Endothelial cell of umbilical vein (primary cell): ENCODE measurements at regions of chr14 and their contacts with region 1.

Region 1: DNA sequence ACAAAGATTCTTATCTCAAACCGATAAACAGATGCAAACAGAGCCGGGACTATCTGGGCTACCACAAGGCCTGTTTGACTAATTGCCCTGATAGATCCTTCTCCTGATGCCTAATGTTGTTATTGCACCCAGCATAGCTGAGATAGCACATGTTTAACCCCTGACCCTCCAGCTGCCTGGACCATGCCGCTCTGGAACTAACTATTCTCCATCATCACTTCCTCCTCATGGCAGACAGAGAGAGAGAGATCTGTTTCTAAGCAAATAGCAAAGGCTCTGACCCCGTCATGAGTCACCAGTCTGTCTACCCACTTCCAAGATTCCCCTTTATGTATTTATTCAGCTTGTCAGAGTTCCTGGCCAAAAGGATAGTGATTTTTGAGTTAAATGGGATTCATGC is 58.2 kb upstream of the FLRT2 start:
- DNase-seq: peak; percentile 100
- H3K4me3 ChIP-seq: no peak overlapping the region
- H3K27ac ChIP-seq: peak overlapping the region; percentile 97
- H3K4me1 ChIP-seq: peaks cover 54% of the 10 kb centered on the region
- H3K27me3 ChIP-seq: no peaks in the 10 kb centered on the region
- CTCF ChIP-seq: no peak
- POLR2A ChIP-seq: peak; percentile 86

Region 2: DNA sequence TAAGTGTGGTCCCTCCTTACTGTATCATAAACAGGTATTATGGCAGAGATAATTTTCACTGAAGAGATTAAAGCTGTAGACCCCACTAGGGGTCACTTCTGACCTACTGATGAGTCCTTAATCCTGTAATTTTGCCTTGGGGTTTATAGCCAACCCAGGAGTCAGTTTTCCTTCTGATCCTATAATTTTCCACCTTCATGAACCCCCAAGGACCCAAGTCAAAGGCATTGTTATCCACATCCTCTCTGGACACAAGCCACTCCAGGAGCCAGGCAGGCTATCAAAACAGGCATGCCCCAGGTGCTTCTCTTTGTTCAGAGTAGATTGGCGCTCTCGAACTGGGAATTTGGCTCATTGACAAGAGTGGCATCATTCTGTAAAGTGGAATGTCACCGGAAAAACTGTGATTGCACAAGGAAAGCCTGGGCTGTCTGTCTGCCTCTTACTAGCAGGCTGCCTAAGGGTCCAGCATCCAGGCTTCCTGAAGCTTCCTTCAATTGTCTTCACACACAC is 1465.0 kb before region 1 on chr14:
- CTCF ChIA-PET with region 1: no interaction called
- POLR2A ChIA-PET with region 1: no interaction called
- dilution Hi-C with region 1: no loop called
- intact Hi-C with region 1: loop called (anchors 1 kb)
- DNase-seq: peak; percentile 96
- H3K4me3 ChIP-seq: no peak overlapping the region
- H3K27ac ChIP-seq: peak overlapping the region; percentile 61
- H3K4me1 ChIP-seq: peaks cover 10% of the 10 kb centered on the region
- H3K27me3 ChIP-seq: no peaks in the 10 kb centered on the region
- CTCF ChIP-seq: peak; percentile 10 to 11
- POLR2A ChIP-seq: no peak

Region 3: DNA sequence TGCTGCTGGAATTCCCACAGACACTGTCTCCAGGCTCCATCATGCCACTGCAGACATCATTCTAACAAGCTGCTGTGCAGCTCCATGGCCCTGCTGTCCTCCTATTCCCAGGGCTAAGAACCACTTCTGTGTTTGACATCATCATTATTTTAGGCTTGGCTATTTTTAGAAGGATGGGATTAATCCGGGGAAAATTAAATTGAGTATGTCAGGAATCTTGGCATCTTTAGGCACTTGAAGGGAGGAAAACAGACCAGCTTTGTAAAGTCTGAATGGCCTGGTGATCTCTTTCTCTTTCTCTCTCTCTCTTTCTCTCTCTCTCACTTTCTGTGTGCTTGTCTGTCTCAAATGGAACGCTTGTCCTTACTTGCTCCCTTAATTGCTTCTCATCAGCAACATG is 510.1 kb before region 1 on chr14:
- CTCF ChIA-PET with region 1: no interaction called
- POLR2A ChIA-PET with region 1: no interaction called
- dilution Hi-C with region 1: no loop called
- intact Hi-C with region 1: loop called (anchors 1 kb)
- DNase-seq: no peak
- H3K4me3 ChIP-seq: no peak overlapping the region
- H3K27ac ChIP-seq: no peak overlapping the region
- H3K4me1 ChIP-seq: peaks cover 35% of the 10 kb centered on the region
- H3K27me3 ChIP-seq: no peaks in the 10 kb centered on the region
- CTCF ChIP-seq: no peak
- POLR2A ChIP-seq: no peak

Region 4: DNA sequence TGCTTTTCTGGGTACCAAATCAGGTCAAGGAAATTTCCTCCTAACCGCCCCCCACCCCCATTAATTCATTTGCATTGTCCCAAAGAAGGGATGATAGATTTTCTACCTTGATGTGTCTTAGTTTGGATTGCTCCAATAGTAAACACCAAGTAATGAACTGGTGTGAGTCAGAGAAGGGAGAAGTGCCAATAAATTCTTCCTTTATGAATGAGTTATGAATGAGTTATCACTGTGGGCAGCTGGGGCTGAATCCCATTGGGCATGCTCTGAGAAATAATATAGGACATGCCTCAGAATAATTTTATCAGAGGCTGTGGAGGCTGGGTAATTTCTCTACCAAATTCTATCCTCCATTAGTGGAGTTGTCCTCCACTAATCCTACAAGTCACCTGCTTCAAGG is 219.7 kb before region 1 on chr14:
- CTCF ChIA-PET with region 1: no interaction called
- POLR2A ChIA-PET with region 1: no interaction called
- dilution Hi-C with region 1: no loop called
- intact Hi-C with region 1: loop called (anchors 5 kb)
- DNase-seq: peak; percentile 84
- H3K4me3 ChIP-seq: no peak overlapping the region
- H3K27ac ChIP-seq: no peak overlapping the region
- H3K4me1 ChIP-seq: peaks cover 19% of the 10 kb centered on the region
- H3K27me3 ChIP-seq: no peaks in the 10 kb centered on the region
- CTCF ChIP-seq: no peak
- POLR2A ChIP-seq: no peak

Region 5: GRCh38 chr14:85333313-85333712 is 138.4 kb before region 1 on chr14:
- CTCF ChIA-PET with region 1: no interaction called
- POLR2A ChIA-PET with region 1: no interaction called
- dilution Hi-C with region 1: no loop called
- intact Hi-C with region 1: loop called (anchors 5 kb)
- DNase-seq: peak; percentile 67
- H3K4me3 ChIP-seq: no peak overlapping the region
- H3K27ac ChIP-seq: no peak overlapping the region
- H3K4me1 ChIP-seq: peaks cover 14% of the 10 kb centered on the region
- H3K27me3 ChIP-seq: no peaks in the 10 kb centered on the region
- CTCF ChIP-seq: no peak
- POLR2A ChIP-seq: no peak

Region 6: DNA sequence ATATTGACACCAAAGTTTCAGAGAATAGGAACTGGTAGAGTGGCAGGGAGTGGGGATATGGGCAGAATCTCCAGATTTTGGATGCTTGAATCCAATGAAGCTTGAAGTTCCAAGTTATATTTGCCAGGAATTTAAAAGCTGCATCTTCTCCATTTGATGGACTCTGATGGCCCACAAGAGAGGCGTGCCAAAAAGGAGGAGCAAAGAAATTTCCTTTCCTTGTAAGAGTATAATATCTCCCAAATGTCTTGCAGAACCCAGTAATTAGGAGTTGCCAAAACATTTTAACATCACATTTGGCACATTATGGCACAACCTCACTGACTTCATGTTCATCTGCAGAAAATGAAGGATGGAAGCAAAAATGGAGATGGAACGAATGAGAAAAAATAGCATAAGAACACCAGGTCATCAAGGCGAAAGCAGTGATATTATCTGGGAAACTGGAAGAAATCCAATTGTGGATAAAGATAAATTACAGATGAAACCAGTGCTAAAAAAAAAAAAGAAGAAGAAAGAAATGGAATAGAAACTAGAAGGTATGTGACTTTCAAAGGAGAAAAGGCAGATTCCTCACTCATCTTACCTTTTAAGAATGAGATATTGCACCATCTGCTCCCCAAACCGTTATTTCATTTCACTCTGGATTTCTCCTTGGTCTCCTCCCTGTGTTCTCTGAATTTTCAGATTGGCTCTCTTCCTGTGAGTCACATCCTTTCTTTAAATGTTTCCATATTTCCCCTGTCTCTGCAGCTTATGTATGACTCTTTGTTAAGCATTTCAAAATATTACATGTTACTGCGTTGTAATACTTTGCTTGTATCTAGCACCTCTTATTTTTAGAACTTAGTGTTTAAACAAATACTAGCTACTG is 44.7 kb after region 1 on chr14:
- CTCF ChIA-PET with region 1: no interaction called
- POLR2A ChIA-PET with region 1: no interaction called
- dilution Hi-C with region 1: no loop called
- intact Hi-C with region 1: loop called (anchors 1 kb)
- DNase-seq: peak; percentile 85
- H3K4me3 ChIP-seq: peak overlapping the region in 2 of 3 experiments; percentile 51 to 67
- H3K27ac ChIP-seq: peak overlapping the region; percentile 69
- H3K4me1 ChIP-seq: peaks cover 21% of the 10 kb centered on the region
- H3K27me3 ChIP-seq: no peaks in the 10 kb centered on the region
- CTCF ChIP-seq: no peak
- POLR2A ChIP-seq: peak; percentile 65

Region 7: GRCh38 chr14:85558505-85558904 is 86.8 kb after region 1 on chr14:
- CTCF ChIA-PET with region 1: no interaction called
- POLR2A ChIA-PET with region 1: no interaction called
- dilution Hi-C with region 1: no loop called
- intact Hi-C with region 1: no loop called
- DNase-seq: no peak
- H3K4me3 ChIP-seq: no peak overlapping the region
- H3K27ac ChIP-seq: no peak overlapping the region
- H3K4me1 ChIP-seq: no peaks in the 10 kb centered on the region
- H3K27me3 ChIP-seq: no peaks in the 10 kb centered on the region
- CTCF ChIP-seq: no peak
- POLR2A ChIP-seq: no peak